Activated T-helper 1 cell treated with anti-CD3 and anti-CD28 coated beads, Interleukin-12 subunit alpha, Interleukin-12 subunit beta, Interleukin-2, Interleukin-4 antibody, amounts not matched to agents 30 ng/mL and 10 ng/mL and 1 ng/mL, durations not matched to agents 14 hours and 24 hours and 36 hours (primary cell): ENCODE measurements at regions of chr3 and their contacts with region 1.

Region 1: DNA sequence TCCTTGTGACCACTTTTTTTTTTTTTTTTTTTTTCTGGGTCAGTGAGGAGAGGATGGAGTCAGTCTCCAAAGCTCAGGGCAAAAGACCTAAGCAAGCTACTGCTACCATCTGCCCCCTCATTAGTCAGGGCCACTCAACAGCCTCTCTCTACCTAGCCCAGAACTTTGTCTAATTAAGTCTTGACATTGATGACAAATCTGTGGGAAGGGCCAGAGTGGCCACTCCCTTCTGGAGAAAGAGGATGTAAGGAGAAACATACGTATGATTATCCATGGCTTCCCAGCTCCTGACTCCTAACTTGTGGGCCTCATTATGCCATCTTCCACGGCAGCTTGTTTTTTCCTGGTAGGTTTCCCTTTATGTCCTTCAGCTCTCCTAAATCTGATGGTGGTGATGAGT is 37.9 kb downstream of the NR1I2 start:
- DNase-seq: no peak
- H3K4me3 Mint-ChIP-seq: no peak overlapping the region
- H3K27ac Mint-ChIP-seq: no peak overlapping the region
- H3K4me1 Mint-ChIP-seq: no peaks in the 10 kb centered on the region
- H3K27me3 Mint-ChIP-seq: peaks cover 1% of the 10 kb centered on the region

Region 2: GRCh38 chr3:120147072-120147871 is 327.5 kb after region 1 on chr3:
- intact Hi-C with region 1: loop called (anchors 5 kb)
- DNase-seq: no peak
- H3K4me3 Mint-ChIP-seq: no peak overlapping the region
- H3K27ac Mint-ChIP-seq: no peak overlapping the region
- H3K4me1 Mint-ChIP-seq: peaks cover 11% of the 10 kb centered on the region
- H3K27me3 Mint-ChIP-seq: no peaks in the 10 kb centered on the region

Region 3: DNA sequence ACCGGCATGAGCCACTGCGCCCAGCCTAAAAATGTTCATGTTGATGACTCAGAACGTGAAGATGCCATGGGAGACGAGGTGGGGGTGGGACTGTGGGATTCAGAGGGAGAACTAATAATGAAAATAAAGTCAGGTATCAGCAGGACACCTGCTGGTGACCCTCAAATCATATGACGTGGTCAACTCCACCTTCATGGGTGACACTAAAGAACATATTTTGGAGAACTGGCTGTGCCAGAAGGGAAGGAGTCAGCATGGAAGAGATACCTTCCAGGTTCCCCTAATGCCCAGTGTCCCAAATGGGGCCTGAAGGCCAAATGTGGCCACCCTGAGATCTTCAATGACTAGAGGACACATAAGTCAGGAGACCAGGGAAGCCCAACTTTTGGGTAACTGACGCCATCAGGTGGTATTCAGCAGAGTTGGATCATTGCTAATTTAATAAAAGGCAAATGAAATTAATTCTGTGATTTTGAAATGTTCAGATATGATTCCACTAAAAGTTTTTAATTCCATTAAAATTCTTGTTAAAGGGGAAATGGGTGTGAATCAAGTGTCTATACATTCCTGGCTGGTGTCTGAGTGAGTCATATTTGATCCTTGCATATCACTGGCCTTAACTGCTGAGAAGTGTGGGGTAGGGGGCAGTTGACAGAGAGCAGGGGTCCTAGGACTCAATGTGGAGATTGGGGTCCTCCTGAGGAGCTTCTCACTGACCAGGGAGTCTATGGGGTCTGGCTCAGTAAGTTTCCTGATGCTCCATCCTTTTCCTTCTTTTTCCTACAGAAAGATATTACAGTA is 363.1 kb after region 1 on chr3:
- intact Hi-C with region 1: loop called (anchors 1 kb)
- DNase-seq: no peak
- H3K4me3 Mint-ChIP-seq: no peak overlapping the region
- H3K27ac Mint-ChIP-seq: no peak overlapping the region
- H3K4me1 Mint-ChIP-seq: no peaks in the 10 kb centered on the region
- H3K27me3 Mint-ChIP-seq: peaks cover 6% of the 10 kb centered on the region

Region 4: DNA sequence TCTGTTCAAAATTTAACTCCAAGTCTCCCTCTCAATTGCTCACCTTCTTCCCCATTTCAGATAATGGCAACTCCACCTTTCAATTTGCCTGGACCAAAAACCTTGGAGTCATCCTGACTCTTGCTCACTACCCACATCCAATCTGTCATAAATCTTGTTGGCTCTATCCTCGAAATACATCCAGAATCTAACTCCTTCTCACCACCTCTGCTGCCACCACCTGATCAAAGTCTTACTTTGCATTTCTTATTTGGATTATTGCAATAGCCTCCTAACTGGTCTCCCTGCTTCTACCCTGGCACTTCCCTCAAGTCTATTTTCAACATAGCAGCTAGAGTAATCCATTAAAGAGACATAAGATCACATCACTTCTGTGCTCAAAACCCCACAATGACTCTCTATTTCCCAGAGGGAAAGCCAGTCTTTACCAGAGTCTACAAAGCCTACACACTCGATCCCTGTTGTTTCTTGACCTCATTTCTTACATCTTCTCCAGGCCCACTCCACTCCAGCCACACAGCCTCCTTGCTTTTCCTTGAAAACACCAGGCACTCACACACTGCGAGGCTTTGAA is 378.6 kb after region 1 on chr3:
- intact Hi-C with region 1: loop called (anchors 1 kb)
- DNase-seq: no peak
- H3K4me3 Mint-ChIP-seq: no peak overlapping the region
- H3K27ac Mint-ChIP-seq: no peak overlapping the region
- H3K4me1 Mint-ChIP-seq: no peaks in the 10 kb centered on the region
- H3K27me3 Mint-ChIP-seq: peaks cover 2% of the 10 kb centered on the region